ENCODE measurements at regions of chr6 and their contacts with region 1.

Region 1: DNA sequence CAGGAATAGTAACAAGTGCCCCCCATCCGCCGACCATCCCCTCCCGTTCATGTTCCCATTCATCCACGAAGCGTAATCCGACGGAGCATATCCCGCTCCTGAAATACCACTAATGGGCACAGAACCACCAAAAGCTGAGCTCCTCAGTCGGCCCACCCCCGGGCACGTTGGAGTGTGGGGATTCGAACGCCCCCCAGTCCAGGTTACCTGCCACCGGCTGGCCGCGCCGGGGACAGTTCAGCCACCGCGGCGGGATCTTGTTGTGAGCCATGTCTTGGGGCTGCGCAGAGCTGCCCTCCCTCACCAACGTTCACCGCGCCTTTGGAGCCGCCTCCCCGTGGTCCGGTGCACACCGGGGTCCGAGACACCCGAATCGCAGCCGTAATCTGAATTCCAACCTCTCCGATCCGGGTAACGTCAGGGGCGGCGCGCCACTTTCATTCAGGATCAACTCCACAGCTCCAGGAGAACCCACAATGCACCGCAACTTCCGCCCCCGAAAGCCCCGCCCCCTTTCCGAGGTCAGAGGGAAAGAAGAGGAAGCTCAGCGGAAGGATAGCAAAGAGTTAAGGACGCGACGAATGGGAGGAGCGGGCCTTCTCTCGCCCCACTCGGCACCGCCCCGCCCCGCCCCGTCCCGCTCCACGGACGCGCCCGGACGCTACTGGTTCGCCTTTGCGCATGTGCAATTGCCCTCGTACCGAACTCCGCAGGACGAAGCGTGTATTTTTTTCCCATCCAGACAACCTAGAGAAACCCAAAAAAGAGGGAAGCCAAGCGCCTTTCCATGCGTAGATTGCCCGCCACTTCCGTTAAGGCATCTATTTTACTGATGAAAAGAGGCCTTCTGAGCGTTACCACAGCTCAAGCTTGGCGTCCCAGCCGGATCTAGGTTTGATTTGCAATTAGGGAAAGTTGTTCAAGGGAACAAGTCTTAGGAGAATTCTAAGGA is at the start of gene RNGTT:
- DNase-seq: peak; percentile 95
- H3K4me3 Mint-ChIP-seq: peak within 1 kb of the TSS; percentile 97
- H3K27ac Mint-ChIP-seq: peak within 1 kb of the TSS; percentile 83
- H3K4me1 Mint-ChIP-seq: peaks cover 30% of the 10 kb centered on the region
- H3K27me3 Mint-ChIP-seq: peaks cover 2% of the 10 kb centered on the region
- total RNA-seq, gene RNGTT: 23.5 and 24.2 TPM in 2 replicates

Region 2: GRCh38 chr6:88952065-88952973 is 11.1 kb before region 1 on chr6:
- intact Hi-C with region 1: no loop called
- DNase-seq: no peak
- H3K4me3 Mint-ChIP-seq: no peak overlapping the region
- H3K27ac Mint-ChIP-seq: no peak overlapping the region
- H3K4me1 Mint-ChIP-seq: peaks cover 2% of the 10 kb centered on the region
- H3K27me3 Mint-ChIP-seq: no peaks in the 10 kb centered on the region

Region 3: GRCh38 chr6:88982720-88983119 is 19.3 kb after region 1 on chr6:
- intact Hi-C with region 1: loop called (anchors 2 kb)
- DNase-seq: no peak
- H3K4me3 Mint-ChIP-seq: no peak overlapping the region
- H3K27ac Mint-ChIP-seq: no peak overlapping the region
- H3K4me1 Mint-ChIP-seq: no peaks in the 10 kb centered on the region
- H3K27me3 Mint-ChIP-seq: peaks cover 10% of the 10 kb centered on the region

Region 4: GRCh38 chr6:89352278-89353117 is 389.1 kb after region 1 on chr6 and contains the start of gene UBE2J1:
- intact Hi-C with region 1: loop called (anchors 10 kb)
- DNase-seq: peak; percentile 74
- H3K4me3 Mint-ChIP-seq: peak within 1 kb of the TSS; percentile 96
- H3K27ac Mint-ChIP-seq: peak within 1 kb of the TSS; percentile 92
- H3K4me1 Mint-ChIP-seq: peaks cover 66% of the 10 kb centered on the region
- H3K27me3 Mint-ChIP-seq: no peaks in the 10 kb centered on the region
- total RNA-seq, gene UBE2J1: 34.4 and 34.8 TPM in 2 replicates

Measured in activated T-helper 2 cell treated with anti-CD3 and anti-CD28 coated beads, Interferon-gamma antibody, Interleukin-2, Interleukin-4, amounts not matched to agents 10 μg/mL and 5 μg/mL and 100 μg/mL, durations not matched to agents 14 hours and 24 hours and 36 hours (primary cell).